Ascending aorta (tissue), 2 donors: ENCODE measurements at regions of chr11 and their contacts with region 1.

Region 1: GRCh38 chr11:6362873-6363678 is 27.2 kb upstream of the SMPD1 start:
- DNase-seq: peak; percentile 47 to 93
- H3K4me3 ChIP-seq: peak overlapping the region in 1 of 2 donors; percentile 7
- H3K27ac ChIP-seq: peak overlapping the region; percentile 88 to 92
- H3K4me1 ChIP-seq: peaks cover 9 to 18% of the 10 kb centered on the region in 2 donors
- H3K27me3 ChIP-seq: no peaks in the 10 kb centered on the region
- CTCF ChIP-seq: peak; percentile 80 to 93 (median 87)

Region 2: DNA sequence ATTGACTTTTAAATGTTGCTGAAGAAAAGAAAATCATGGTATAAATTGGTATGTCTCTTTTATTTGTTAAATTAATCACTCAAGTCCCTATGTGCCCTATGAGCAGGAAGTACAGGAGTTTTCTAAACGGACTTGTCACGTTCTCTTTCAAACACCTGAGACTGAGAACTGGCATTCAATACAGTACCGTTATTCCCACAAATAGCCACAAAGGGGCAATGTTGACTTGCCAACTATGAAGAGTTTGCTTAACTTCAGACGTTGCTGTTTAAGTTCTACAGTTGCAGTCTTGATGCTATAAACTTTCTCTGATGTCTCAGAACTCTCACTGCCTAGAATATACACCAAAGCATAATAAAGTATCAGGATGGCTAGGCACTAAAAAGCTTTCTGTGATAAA is 340.1 kb before region 1 on chr11:
- intact Hi-C with region 1: loop called (anchors 5 kb)
- DNase-seq: no peak
- H3K4me3 ChIP-seq: no peak overlapping the region
- H3K27ac ChIP-seq: no peak overlapping the region
- H3K4me1 ChIP-seq: no peaks in the 10 kb centered on the region
- H3K27me3 ChIP-seq: no peaks in the 10 kb centered on the region
- CTCF ChIP-seq: peak in 2 of 3 experiments; percentile 13 to 39

Region 3: DNA sequence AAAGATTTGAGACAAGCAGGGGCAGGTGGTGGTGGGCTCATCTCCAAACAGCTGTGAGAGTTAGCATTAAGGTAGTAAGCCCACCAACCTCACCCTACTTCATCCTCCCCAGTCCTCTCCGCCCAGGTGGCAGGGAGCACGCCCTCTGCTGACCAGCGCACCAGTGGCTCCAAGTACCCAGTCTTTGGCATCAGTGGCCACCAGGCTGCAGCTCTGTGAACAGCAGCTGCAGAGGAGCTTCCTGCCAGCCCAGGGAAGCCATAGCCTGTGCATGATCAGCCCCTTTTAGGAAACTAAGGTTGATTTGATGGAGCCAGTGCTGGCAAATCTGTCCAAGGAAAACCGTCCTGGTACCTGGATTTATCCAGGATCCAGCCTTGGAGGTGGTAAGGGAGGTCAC is 64.5 kb before region 1 on chr11:
- intact Hi-C with region 1: loop called (anchors 1 kb)
- DNase-seq: no peak
- H3K4me3 ChIP-seq: no peak overlapping the region
- H3K27ac ChIP-seq: no peak overlapping the region
- H3K4me1 ChIP-seq: no peaks in the 10 kb centered on the region
- H3K27me3 ChIP-seq: no peaks in the 10 kb centered on the region
- CTCF ChIP-seq: peak; percentile 17 to 55 (median 41)